Activated CD8-positive, alpha-beta T cell treated with anti-CD3 and anti-CD28 coated beads, Interleukin-2, amount 10 ng/mL, durations not matched to agents 7 days and 5 days (primary cell): ENCODE measurements at regions of chr11 and their contacts with region 1.

Region 1: GRCh38 chr11:75706260-75706729 is 11.3 kb upstream of the MOGAT2 start:
- DNase-seq: peak; percentile 76
- ATAC-seq: peak; percentile 94
- H3K4me3 Mint-ChIP-seq: no peak overlapping the region
- H3K27ac Mint-ChIP-seq: no peak overlapping the region
- H3K4me1 Mint-ChIP-seq: peaks cover 17% of the 10 kb centered on the region
- H3K27me3 Mint-ChIP-seq: peaks cover 2% of the 10 kb centered on the region

Region 2: GRCh38 chr11:75673977-75674582 is 32.2 kb before region 1 on chr11:
- CTCF ChIA-PET with region 1: interaction called, 13 read pairs
- POLR2A ChIA-PET with region 1: no interaction called
- DNase-seq: peak; percentile 53
- ATAC-seq: peak; percentile 70
- H3K4me3 Mint-ChIP-seq: no peak overlapping the region
- H3K27ac Mint-ChIP-seq: peak overlapping the region; percentile 4
- H3K4me1 Mint-ChIP-seq: peaks cover 13% of the 10 kb centered on the region
- H3K27me3 Mint-ChIP-seq: peaks cover 40% of the 10 kb centered on the region

Region 3: GRCh38 chr11:75689863-75690609 is 16.3 kb before region 1 on chr11:
- CTCF ChIA-PET with region 1: interaction called, 14 read pairs
- POLR2A ChIA-PET with region 1: no interaction called
- DNase-seq: no peak
- ATAC-seq: no peak
- H3K4me3 Mint-ChIP-seq: no peak overlapping the region
- H3K27ac Mint-ChIP-seq: no peak overlapping the region
- H3K4me1 Mint-ChIP-seq: peaks cover 6% of the 10 kb centered on the region
- H3K27me3 Mint-ChIP-seq: peaks cover 57% of the 10 kb centered on the region

Region 4: GRCh38 chr11:75718419-75719339 is 12.4 kb after region 1 on chr11:
- CTCF ChIA-PET with region 1: interaction called, 11 read pairs
- POLR2A ChIA-PET with region 1: no interaction called
- DNase-seq: no peak
- ATAC-seq: no peak
- H3K4me3 Mint-ChIP-seq: no peak overlapping the region
- H3K27ac Mint-ChIP-seq: no peak overlapping the region
- H3K4me1 Mint-ChIP-seq: peaks cover 2% of the 10 kb centered on the region
- H3K27me3 Mint-ChIP-seq: peaks cover 9% of the 10 kb centered on the region

Region 5: GRCh38 chr11:75867775-75868374 is 161.6 kb after region 1 on chr11:
- CTCF ChIA-PET with region 1: interaction called, 24 read pairs
- POLR2A ChIA-PET with region 1: no interaction called
- DNase-seq: peak; percentile 65
- ATAC-seq: peak; percentile 51
- H3K4me3 Mint-ChIP-seq: no peak overlapping the region
- H3K27ac Mint-ChIP-seq: no peak overlapping the region
- H3K4me1 Mint-ChIP-seq: peaks cover 4% of the 10 kb centered on the region
- H3K27me3 Mint-ChIP-seq: no peaks in the 10 kb centered on the region